Heart left ventricle (tissue), 16 donors: ENCODE measurements at regions of chr5 and their contacts with region 1.

Region 1: DNA sequence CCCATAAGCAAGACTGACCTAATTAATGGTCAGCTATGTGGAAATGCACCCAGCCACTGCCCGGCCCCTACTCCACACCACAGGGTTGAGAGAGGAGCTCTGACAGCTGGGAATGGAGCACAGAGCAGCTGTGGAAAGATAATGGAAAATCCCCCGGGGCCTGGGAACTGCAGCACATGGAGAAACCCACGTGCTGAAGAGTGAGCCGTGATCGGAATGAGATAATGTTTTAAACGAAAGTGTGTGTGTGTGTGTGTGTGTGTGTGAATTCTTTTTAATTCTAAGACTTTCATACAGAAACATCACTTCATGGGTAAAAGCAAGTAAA is 13.1 kb upstream of the SLC12A7 start:
- DNase-seq: peak in 4 of 5 donors; percentile 79 to 90 (median 84)
- ATAC-seq: peak; percentile 61 to 73 (median 64)
- H3K4me3 ChIP-seq: peak overlapping the region in 3 of 12 donors; percentile 4 to 34 (median 11)
- H3K27ac ChIP-seq: peak overlapping the region; percentile 46 to 96 (median 86)
- H3K4me1 ChIP-seq: peaks cover 3 to 88% (median 58%) of the 10 kb centered on the region in 12 donors
- H3K27me3 ChIP-seq: no peaks in the 10 kb centered on the region
- CTCF ChIP-seq: no peak
- POLR2A ChIP-seq: no peak

Region 2: GRCh38 chr5:892394-893136 is 232.4 kb before region 1 on chr5 and contains the starts of genes BRD9 and TRIP13:
- intact Hi-C with region 1: no loop called
- DNase-seq: peak; percentile 84 to 92 (median 87)
- ATAC-seq: peak; percentile 69 to 98 (median 96)
- H3K4me3 ChIP-seq: peak within 1 kb of the TSS; percentile 48 to 99 (median 84)
- H3K27ac ChIP-seq: peak within 1 kb of the TSS; percentile 66 to 97 (median 91)
- H3K4me1 ChIP-seq: peaks cover 0 to 24% (median 14%) of the 10 kb centered on the region in 12 donors
- H3K27me3 ChIP-seq: no peaks in the 10 kb centered on the region
- CTCF ChIP-seq: peak in 6 of 12 donors; percentile 9 to 27 (median 20)
- POLR2A ChIP-seq: peak in 1 of 2 donors; percentile 64
- total RNA-seq, gene BRD9: 17.9 to 32.1 (median 23.9) TPM
- total RNA-seq, gene TRIP13: 0.31 to 4.2 (median 0.49) TPM

Region 3: DNA sequence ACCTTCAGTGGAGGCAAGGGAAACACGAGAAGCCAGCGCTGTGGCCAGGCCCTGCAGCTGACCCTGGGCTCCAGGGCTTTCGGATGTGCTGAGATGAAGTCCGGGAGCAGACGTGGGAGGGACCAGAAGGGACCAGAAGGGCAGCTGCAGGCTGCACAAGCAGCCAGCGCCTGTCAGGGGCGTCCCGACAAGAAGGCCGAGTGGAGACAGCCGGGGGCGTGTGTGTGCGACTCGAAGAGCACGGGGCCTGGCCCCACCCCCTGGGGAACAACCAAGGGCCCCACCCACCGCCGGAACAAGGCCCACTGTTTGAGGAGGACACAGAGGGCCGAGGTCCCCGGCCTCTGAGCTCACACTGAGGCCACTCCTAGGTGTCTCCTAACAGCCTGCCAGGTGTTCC is 44.6 kb before region 1 on chr5:
- intact Hi-C with region 1: no loop called
- DNase-seq: peak in 1 of 5 donors; percentile 68
- ATAC-seq: peak in 3 of 4 donors; percentile 20 to 45 (median 23)
- H3K4me3 ChIP-seq: no peak overlapping the region
- H3K27ac ChIP-seq: no peak overlapping the region
- H3K4me1 ChIP-seq: peaks cover 0 to 5% (median 0%) of the 10 kb centered on the region in 12 donors
- H3K27me3 ChIP-seq: no peaks in the 10 kb centered on the region
- CTCF ChIP-seq: no peak
- POLR2A ChIP-seq: no peak

Region 4: GRCh38 chr5:1105350-1106265 is 19.4 kb before region 1 on chr5:
- intact Hi-C with region 1: loop called in 1 of 10 experiments (anchors 2 kb)
- DNase-seq: no peak
- ATAC-seq: no peak
- H3K4me3 ChIP-seq: peak overlapping the region in 4 of 12 donors; percentile 4 to 50 (median 19)
- H3K27ac ChIP-seq: peak overlapping the region; percentile 85 to 99 (median 96)
- H3K4me1 ChIP-seq: peaks cover 40 to 100% (median 94%) of the 10 kb centered on the region in 12 donors
- H3K27me3 ChIP-seq: no peaks in the 10 kb centered on the region
- CTCF ChIP-seq: no peak
- POLR2A ChIP-seq: no peak